Aorta (tissue), 5 donors: ENCODE measurements at regions of chr10 and their contacts with region 1.

Region 1: GRCh38 chr10:104353325-104354048 is at the start of gene CFAP58:
- DNase-seq: peak; percentile 96 to 97
- ATAC-seq: peak; percentile 93
- H3K4me3 ChIP-seq: peak within 1 kb of the TSS in 1 of 2 donors; percentile 44
- H3K27ac ChIP-seq: no peak within 1 kb of the TSS
- H3K4me1 ChIP-seq: no peaks in the 10 kb centered on the region
- H3K27me3 ChIP-seq: no peaks in the 10 kb centered on the region
- total RNA-seq, gene CFAP58: 1.1 to 1.3 TPM

Region 2: DNA sequence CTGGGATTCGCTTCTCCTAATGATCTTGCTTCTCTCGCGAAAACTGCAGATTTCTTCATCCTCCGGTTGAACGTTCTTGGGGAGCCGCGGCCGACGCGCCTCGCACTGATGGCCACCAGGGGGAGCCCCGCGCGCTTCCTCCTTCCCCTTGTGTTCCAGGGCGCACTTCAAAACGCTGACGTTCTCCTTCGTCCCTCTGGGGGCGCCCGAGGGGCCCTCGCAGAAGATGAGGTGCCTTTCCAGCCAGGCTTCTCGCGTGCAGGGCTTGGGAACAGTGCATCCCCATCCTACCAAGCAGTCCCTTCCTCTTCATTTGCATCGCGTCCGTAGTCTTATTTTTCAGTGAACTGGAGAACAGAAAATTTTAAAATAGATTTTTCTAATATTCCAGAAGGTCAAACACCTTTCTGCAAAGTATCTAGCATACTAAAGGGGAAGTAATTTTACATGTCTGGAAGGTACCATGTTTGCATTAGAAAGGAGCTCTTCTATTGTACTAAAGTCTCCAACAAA is 62.0 kb before region 1 on chr10:
- intact Hi-C with region 1: loop called (anchors 1 kb)
- DNase-seq: peak; percentile 92 to 96
- ATAC-seq: peak; percentile 98
- H3K4me3 ChIP-seq: no peak overlapping the region
- H3K27ac ChIP-seq: no peak overlapping the region
- H3K4me1 ChIP-seq: no peaks in the 10 kb centered on the region
- H3K27me3 ChIP-seq: no peaks in the 10 kb centered on the region

Region 3: GRCh38 chr10:104308439-104308903 is 45.0 kb before region 1 on chr10:
- intact Hi-C with region 1: loop called in 1 of 2 experiments (anchors 1 kb)
- DNase-seq: no peak
- ATAC-seq: no peak
- H3K4me3 ChIP-seq: no peak overlapping the region
- H3K27ac ChIP-seq: no peak overlapping the region
- H3K4me1 ChIP-seq: peaks cover 0 to 2% of the 10 kb centered on the region in 2 donors
- H3K27me3 ChIP-seq: no peaks in the 10 kb centered on the region